Left cardiac atrium (tissue), 4 donors: ENCODE measurements at regions of chr12 and their contacts with region 1.

Region 1: GRCh38 chr12:125330645-125331341 is 265.6 kb downstream of the AACS start:
- DNase-seq: peak; percentile 68
- ATAC-seq: peak; percentile 90 to 97

Region 2: GRCh38 chr12:125029761-125030358 is 300.9 kb before region 1 on chr12:
- intact Hi-C with region 1: no loop called
- DNase-seq: no peak
- ATAC-seq: no peak

Region 3: GRCh38 chr12:125402874-125403789 is 72.3 kb after region 1 on chr12:
- intact Hi-C with region 1: loop called (anchors 2 to 5 kb)
- DNase-seq: no peak
- ATAC-seq: no peak